ENCODE measurements at regions of chr9 and their contacts with region 1.

Region 1: DNA sequence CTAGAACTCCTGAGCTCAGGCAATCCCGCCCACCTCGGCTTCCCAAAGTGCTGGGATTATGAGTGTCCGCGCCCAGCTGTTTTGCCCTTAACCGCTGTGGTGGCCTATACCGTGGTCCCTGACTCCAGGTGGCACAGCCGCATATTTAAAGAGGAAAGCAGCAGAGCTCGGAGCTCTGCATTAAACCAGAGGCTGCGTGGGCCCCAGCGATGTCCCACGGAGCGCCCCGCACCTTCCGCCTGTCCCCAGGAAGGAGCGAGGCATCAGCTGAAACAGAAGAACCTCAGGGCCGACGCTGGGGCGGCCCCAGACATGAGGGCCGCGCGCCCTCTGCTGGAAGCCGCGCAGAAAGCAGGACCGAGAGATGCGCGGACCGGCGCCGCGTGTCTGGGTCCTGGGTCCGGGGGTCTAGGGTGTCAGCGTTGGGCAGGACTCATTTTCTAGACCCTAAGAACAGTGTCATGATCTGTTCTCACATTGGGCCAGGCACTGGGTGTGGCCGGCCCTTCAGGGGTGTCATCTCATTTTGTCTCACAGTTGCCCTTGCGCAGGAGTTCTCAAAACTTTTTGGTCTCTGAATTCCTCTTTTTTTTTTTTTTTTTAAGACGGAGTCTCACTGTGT is 37.7 kb downstream of the LAMC3 start:
- DNase-seq: peak; percentile 81
- H3K4me3 Mint-ChIP-seq: no peak overlapping the region
- H3K27ac Mint-ChIP-seq: no peak overlapping the region
- H3K4me1 Mint-ChIP-seq: peaks cover 4% of the 10 kb centered on the region
- H3K27me3 Mint-ChIP-seq: peaks cover 1% of the 10 kb centered on the region

Region 2: DNA sequence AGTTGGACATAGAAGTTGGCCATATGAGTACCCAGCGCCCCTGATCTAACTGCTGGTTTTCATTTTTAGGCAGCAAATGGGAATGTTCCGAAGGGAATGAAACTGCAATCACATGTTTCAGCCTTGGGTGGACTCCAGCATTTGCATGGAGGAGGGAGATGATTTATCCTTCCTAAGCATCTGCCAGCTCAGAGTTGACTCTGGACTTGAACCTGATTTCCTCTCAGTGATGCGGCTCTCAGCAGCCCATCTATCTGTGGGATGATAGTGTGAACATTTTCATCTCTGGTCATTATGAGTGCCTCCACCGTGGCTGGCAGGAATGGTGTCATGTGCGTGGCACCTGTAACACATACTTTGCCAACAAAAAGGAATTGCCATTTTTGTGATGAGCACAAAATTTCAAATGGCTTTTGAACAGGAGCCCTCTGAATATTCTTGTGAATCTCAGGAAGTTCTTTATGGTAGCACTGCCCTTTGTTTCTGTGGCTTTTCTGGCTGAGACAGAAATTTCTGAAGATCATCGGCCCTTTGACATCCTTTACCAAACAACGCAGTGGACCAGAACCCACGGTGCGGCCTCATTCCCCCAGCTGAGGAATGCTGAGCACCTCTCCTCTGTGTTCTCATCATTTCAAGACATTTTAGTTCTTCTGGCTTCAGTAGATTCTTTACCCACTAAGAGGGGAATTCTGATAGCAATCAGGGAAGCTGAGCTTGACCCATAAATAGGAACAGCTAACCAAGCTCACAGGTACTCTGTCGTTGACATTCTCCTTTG is 438.9 kb before region 1 on chr9:
- CTCF ChIA-PET with region 1: no interaction called
- POLR2A ChIA-PET with region 1: no interaction called
- intact Hi-C with region 1: no loop called
- DNase-seq: no peak
- H3K4me3 Mint-ChIP-seq: no peak overlapping the region
- H3K27ac Mint-ChIP-seq: no peak overlapping the region
- H3K4me1 Mint-ChIP-seq: no peaks in the 10 kb centered on the region
- H3K27me3 Mint-ChIP-seq: no peaks in the 10 kb centered on the region

Region 3: DNA sequence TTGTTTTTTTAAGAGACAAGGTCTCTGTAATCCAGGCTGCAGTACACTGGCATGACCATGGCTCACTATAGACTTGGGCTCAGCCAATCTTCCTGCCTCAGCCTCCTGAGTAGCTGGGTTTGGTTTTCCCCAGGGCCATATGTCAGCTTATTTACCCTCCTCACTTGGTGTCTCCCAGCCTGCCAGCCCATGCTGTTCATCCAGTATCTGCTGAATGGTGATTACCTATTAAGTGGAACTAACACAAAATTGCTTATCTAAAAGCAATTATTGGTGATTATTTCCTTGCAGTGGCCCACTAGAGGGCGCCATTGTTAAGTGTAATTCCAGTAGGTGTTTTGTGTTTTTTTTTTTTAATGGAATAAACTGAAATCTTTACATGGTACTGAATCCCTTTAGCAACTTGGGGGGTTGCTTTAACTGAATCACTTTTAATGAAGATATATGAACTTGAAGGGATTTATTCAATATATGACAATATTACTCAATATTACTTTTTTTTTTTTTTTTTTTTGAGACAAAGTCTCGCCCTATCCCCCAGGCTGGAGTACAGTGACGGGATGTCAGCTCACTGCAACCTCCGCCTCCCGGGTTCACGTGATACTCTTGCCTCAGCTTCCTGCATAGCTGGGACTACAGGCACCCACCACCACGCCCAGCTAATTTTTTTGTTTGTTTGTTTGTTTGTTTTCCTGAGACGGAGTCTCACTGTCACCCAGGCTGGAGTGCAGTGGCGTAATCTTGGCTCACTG is 339.3 kb before region 1 on chr9:
- CTCF ChIA-PET with region 1: interaction called, 13 read pairs
- POLR2A ChIA-PET with region 1: no interaction called
- intact Hi-C with region 1: loop called (anchors 10 kb)
- DNase-seq: peak; percentile 69
- H3K4me3 Mint-ChIP-seq: no peak overlapping the region
- H3K27ac Mint-ChIP-seq: no peak overlapping the region
- H3K4me1 Mint-ChIP-seq: peaks cover 6% of the 10 kb centered on the region
- H3K27me3 Mint-ChIP-seq: no peaks in the 10 kb centered on the region

Region 4: DNA sequence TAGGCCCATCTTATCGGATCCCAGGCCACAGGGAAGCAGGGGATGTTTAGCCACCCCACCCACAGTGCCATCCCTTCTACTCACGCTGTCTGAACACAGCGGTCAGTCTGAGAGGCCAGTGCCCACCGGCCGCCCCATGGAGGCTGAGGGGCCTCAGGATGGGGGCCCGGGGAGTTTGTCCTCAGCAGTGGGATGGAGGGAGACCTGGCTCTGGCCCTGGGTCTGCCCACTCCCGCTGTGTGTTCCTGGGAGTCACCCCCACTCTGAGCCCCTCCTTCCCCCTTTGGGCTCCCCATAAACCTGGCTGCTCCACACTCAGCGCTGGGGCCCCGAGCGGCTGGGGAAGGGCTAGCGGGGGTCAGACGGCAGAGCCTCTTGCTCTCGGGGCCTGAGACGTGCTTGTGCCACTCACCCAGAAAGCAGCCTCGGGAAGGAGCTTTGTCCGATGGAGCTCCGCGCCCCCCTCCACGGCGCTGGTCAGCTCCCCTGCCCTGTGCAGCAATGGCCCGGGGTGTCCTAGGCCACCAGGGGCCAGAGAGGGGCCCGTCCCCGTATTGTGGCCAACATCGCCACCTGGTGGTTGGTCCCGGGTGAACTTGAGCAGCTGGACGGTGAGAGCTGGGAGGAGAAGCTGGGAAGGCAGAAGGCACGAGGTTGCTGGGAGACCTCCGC is 48.6 kb before region 1 on chr9:
- CTCF ChIA-PET with region 1: interaction called, 10 read pairs
- POLR2A ChIA-PET with region 1: no interaction called
- intact Hi-C with region 1: no loop called
- DNase-seq: peak; percentile 66
- H3K4me3 Mint-ChIP-seq: no peak overlapping the region
- H3K27ac Mint-ChIP-seq: no peak overlapping the region
- H3K4me1 Mint-ChIP-seq: no peaks in the 10 kb centered on the region
- H3K27me3 Mint-ChIP-seq: peaks cover 13% of the 10 kb centered on the region